Activated naive CD4-positive, alpha-beta T cell treated with anti-CD3 and anti-CD28 coated beads for 36 hours (primary cell): ENCODE measurements at regions of chr1 and their contacts with region 1.

Region 1: GRCh38 chr1:34859446-34860200 is at the start of gene SMIM12:
- DNase-seq: peak; percentile 96
- H3K4me3 Mint-ChIP-seq: peak within 1 kb of the TSS; percentile 98
- H3K27ac Mint-ChIP-seq: peak within 1 kb of the TSS; percentile 94
- H3K4me1 Mint-ChIP-seq: peaks cover 53% of the 10 kb centered on the region
- H3K27me3 Mint-ChIP-seq: no peaks in the 10 kb centered on the region
- total RNA-seq, gene SMIM12: 37.6 to 38.6 TPM

Region 2: DNA sequence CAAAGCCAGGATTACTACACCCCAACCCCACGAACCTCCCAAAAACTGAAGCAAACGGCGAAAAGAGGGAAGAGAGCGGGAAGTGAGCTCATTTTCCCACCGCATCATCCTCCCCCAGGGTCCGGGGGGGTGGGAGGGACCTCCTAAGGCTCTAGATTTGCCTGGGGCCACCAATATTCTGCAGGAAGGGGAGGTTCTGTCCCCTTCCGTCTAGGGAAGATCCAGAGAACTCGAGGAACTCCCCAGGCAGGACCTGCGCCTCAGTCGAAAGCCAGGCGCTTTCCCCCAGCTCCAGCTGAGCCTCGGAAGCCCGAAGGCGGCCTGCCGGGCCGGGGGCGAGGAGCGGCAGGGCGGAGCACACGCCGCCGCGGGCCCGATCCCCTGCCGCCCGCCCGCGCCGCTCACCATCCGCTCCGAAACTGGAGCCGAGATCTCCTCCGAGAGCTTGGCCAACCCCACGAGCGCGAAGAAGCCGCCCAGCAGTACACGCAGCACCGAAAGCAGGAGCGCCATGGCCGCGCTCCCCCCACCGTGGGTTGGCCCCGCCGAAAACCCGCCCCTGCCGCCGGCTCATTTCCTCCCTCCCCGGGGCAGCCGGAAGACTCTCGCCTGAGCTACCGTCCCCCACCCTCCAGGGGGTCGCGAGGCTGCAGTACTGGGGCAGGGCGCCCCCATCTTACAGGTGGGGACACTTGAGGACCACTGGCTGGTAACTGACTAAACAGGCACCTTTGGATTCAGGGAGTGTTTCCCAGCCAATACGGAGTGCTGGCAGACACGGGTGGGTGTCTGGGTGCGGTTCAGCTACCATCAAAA is 125.4 kb after region 1 on chr1 and contains the start of gene TMEM35B:
- CTCF ChIA-PET with region 1: no interaction called
- intact Hi-C with region 1: loop called (anchors 5 kb)
- DNase-seq: peak; percentile 81
- H3K4me3 Mint-ChIP-seq: peak within 1 kb of the TSS; percentile 97
- H3K27ac Mint-ChIP-seq: peak within 1 kb of the TSS; percentile 93
- H3K4me1 Mint-ChIP-seq: peaks cover 49% of the 10 kb centered on the region
- H3K27me3 Mint-ChIP-seq: no peaks in the 10 kb centered on the region
- total RNA-seq, gene TMEM35B: 18.2 to 19.9 TPM